Activated CD4-positive, alpha-beta T cell treated with anti-CD3 and anti-CD28 coated beads for 36 hours (primary cell): ENCODE measurements at regions of chr11 and their contacts with region 1.

Region 1: GRCh38 chr11:65506770-65507505 is 8.1 kb downstream of the MALAT1 start:
- DNase-seq: peak; percentile 75
- ATAC-seq: peak; percentile 51
- H3K4me3 Mint-ChIP-seq: no peak overlapping the region
- H3K27ac Mint-ChIP-seq: no peak overlapping the region
- H3K4me1 Mint-ChIP-seq: peaks cover 60% of the 10 kb centered on the region
- H3K27me3 Mint-ChIP-seq: no peaks in the 10 kb centered on the region

Region 2: GRCh38 chr11:65487413-65488272 is 19.3 kb before region 1 on chr11:
- CTCF ChIA-PET with region 1: interaction called, 11 read pairs
- POLR2A ChIA-PET with region 1: interaction called, 33 read pairs
- intact Hi-C with region 1: no loop called
- DNase-seq: peak; percentile 88
- ATAC-seq: peak; percentile 76
- H3K4me3 Mint-ChIP-seq: peak overlapping the region; percentile 42
- H3K27ac Mint-ChIP-seq: peak overlapping the region; percentile 88
- H3K4me1 Mint-ChIP-seq: peaks cover 59% of the 10 kb centered on the region
- H3K27me3 Mint-ChIP-seq: no peaks in the 10 kb centered on the region

Region 3: GRCh38 chr11:66100272-66101065 is 593.5 kb after region 1 on chr11:
- CTCF ChIA-PET with region 1: no interaction called
- POLR2A ChIA-PET with region 1: no interaction called
- intact Hi-C with region 1: no loop called
- DNase-seq: peak; percentile 80
- ATAC-seq: peak; percentile 91
- H3K4me3 Mint-ChIP-seq: peak overlapping the region; percentile 70
- H3K27ac Mint-ChIP-seq: peak overlapping the region; percentile 94
- H3K4me1 Mint-ChIP-seq: peaks cover 66% of the 10 kb centered on the region
- H3K27me3 Mint-ChIP-seq: no peaks in the 10 kb centered on the region

Region 4: DNA sequence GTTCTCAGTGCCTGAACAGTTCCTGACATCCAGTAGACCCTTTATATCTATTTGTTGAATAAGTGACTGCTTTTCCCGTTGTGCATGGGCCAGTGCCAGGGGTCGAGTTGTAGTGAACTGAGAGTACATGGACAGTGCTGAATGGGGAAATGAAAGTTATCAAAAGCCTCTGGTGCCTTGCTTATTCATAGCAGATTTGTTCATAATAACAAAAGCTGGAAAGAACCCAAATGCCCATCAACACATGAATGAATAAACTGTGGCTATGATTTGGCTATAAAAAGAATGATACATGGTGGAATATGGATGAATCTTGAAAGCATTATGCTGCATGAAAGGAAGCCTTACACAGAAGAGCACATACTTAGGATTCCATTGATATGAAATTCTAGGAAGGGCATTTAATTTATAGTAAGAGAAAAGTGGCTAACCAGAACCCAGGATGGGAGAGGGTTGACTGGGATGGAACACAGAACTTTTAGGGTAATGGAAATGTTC is 605.7 kb after region 1 on chr11:
- CTCF ChIA-PET with region 1: no interaction called
- POLR2A ChIA-PET with region 1: no interaction called
- intact Hi-C with region 1: no loop called
- DNase-seq: no peak
- ATAC-seq: no peak
- H3K4me3 Mint-ChIP-seq: no peak overlapping the region
- H3K27ac Mint-ChIP-seq: peak overlapping the region; percentile 91
- H3K4me1 Mint-ChIP-seq: peaks cover 96% of the 10 kb centered on the region
- H3K27me3 Mint-ChIP-seq: no peaks in the 10 kb centered on the region